Activated T-helper 1 cell treated with anti-CD3 and anti-CD28 coated beads, Interleukin-12 subunit alpha, Interleukin-12 subunit beta, Interleukin-2, Interleukin-4 antibody, amounts not matched to agents 30 ng/mL and 10 ng/mL and 1 ng/mL, durations not matched to agents 14 hours and 24 hours and 36 hours (primary cell): ENCODE measurements at regions of chr6 and their contacts with region 1.

Region 1: DNA sequence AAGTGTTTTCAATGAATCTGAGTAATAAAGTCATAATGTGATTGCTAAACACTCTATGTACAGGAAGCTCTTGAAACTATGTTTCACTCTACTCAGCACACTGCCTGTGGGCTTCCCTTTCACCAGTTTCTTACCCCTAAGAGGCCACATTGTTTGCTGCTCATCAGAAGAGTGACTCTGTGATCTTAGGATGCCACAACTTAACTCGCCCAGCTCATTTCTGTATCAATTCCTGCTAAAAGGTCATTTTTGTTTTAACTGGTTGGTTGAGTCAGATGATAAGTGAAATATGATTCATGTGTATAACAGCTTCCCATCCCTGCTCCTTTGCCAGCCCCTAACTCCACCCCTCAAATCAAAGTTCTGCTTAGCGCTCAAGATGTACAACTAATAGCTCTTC is 9.8 kb upstream of the NDUFAF4 start:
- DNase-seq: no peak
- H3K4me3 Mint-ChIP-seq: peak overlapping the region; percentile 6
- H3K27ac Mint-ChIP-seq: no peak overlapping the region
- H3K4me1 Mint-ChIP-seq: peaks cover 14% of the 10 kb centered on the region
- H3K27me3 Mint-ChIP-seq: peaks cover 1% of the 10 kb centered on the region

Region 2: DNA sequence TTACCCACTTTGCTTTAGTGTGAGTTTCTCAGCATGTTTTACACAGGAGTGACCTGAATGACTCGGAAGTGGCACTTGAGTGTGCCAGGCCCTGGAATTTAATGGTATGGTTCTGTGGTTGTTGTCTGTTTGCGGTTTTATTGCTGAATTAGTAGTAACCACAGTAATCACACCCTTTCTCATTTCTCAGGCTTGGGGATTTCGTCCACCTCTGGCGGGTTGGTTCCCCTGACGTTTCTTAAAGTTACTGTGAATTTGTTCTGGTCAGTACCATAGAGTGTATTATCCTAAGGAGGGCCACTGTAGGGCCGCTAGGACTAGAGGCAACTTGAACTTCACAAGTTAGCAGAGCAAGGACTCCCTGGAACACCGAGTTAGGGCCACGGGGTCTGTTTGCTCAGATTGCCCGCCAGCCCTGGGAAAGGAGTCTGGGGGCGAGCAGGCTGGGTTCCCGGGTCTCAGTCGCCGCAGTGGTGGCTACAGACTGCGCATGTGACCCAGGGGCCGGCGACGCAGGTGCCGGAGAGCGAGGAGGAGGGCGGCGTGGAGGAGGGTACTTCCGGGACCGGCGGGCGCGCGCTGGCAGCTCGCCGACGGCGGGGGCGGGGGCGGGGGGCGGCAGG is 16.5 kb after region 1 on chr6:
- intact Hi-C with region 1: loop called (anchors 1 kb)
- DNase-seq: no peak
- H3K4me3 Mint-ChIP-seq: peak overlapping the region; percentile 87
- H3K27ac Mint-ChIP-seq: peak overlapping the region; percentile 85
- H3K4me1 Mint-ChIP-seq: peaks cover 33% of the 10 kb centered on the region
- H3K27me3 Mint-ChIP-seq: peaks cover 2% of the 10 kb centered on the region